ENCODE measurements at regions of chr9 and their contacts with region 1.

Region 1: DNA sequence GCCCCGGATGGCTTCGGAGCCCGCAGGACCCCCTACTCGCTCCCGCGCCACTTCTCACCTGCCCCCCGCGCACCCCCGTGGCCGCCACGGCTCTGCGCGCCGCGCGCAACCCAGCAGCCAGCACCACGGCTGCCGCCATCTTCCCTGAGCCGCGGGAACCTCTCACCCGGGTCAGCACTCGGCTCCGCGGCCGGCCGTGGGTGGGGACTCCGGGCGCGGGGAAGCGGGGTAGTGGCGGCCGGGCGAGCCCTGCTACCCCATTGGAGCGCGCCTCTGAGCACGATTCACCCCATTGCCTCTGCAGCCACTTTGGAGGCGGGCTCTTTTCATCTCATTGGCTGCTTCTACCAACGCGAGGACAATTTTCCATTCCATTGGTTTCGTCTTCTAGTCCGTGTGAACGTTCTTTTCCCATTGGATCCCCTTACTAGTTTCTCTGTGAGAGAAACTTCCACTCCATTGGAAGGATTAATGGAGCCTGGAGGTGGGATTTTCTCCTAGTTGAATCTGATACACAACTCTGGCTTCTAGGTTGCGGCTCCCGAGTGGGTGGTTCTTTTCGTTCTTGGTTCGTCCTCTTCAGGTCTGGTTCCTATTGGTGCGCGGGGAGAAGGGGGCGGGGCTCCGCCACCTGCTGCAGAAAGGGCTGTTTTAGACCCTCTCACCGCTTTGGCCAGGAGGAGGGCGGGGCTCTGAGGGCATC is at the start of gene HINT2:
- DNase-seq: peak; percentile 98
- ATAC-seq: peak; percentile 82
- H3K4me3 ChIP-seq: peak within 1 kb of the TSS; percentile 61 to 96 (median 88)
- H3K4me3 Mint-ChIP-seq: peak within 1 kb of the TSS; percentile 97
- H3K27ac ChIP-seq: peak within 1 kb of the TSS; percentile 87 to 88
- H3K27ac Mint-ChIP-seq: peak within 1 kb of the TSS; percentile 98
- H3K4me1 ChIP-seq: peaks cover 26 to 33% of the 10 kb centered on the region in 2 donors
- H3K4me1 Mint-ChIP-seq: peaks cover 30% of the 10 kb centered on the region
- H3K27me3 ChIP-seq: no peaks in the 10 kb centered on the region
- H3K27me3 Mint-ChIP-seq: no peaks in the 10 kb centered on the region
- CTCF ChIP-seq: no peak
- total RNA-seq, gene HINT2: 29.7 and 31.9 TPM in 2 replicates

Region 2: GRCh38 chr9:34665381-34666250 is 1149.4 kb before region 1 on chr9:
- CTCF ChIA-PET with region 1: no interaction called
- POLR2A ChIA-PET with region 1: no interaction called
- intact Hi-C with region 1: loop called (anchors 5 kb)
- DNase-seq: peak; percentile 93
- ATAC-seq: peak; percentile 90
- H3K4me3 ChIP-seq: peak overlapping the region; percentile 65 to 87 (median 83)
- H3K4me3 Mint-ChIP-seq: peak overlapping the region; percentile 94
- H3K27ac ChIP-seq: peak overlapping the region; percentile 86 to 93
- H3K27ac Mint-ChIP-seq: peak overlapping the region; percentile 94
- H3K4me1 ChIP-seq: peaks cover 10 to 18% of the 10 kb centered on the region in 2 donors
- H3K4me1 Mint-ChIP-seq: peaks cover 20% of the 10 kb centered on the region
- H3K27me3 ChIP-seq: no peaks in the 10 kb centered on the region
- H3K27me3 Mint-ChIP-seq: no peaks in the 10 kb centered on the region
- CTCF ChIP-seq: no peak

Region 3: GRCh38 chr9:35646533-35647265 is 168.3 kb before region 1 on chr9:
- CTCF ChIA-PET with region 1: interaction called, 3 read pairs
- POLR2A ChIA-PET with region 1: no interaction called
- intact Hi-C with region 1: loop called (anchors 1 kb)
- DNase-seq: peak; percentile 95
- ATAC-seq: peak; percentile 89
- H3K4me3 ChIP-seq: peak overlapping the region; percentile 76 to 90 (median 84)
- H3K4me3 Mint-ChIP-seq: peak overlapping the region; percentile 97
- H3K27ac ChIP-seq: peak overlapping the region; percentile 88 to 95
- H3K27ac Mint-ChIP-seq: peak overlapping the region; percentile 97
- H3K4me1 ChIP-seq: peaks cover 76 to 92% of the 10 kb centered on the region in 2 donors
- H3K4me1 Mint-ChIP-seq: peaks cover 81% of the 10 kb centered on the region
- H3K27me3 ChIP-seq: no peaks in the 10 kb centered on the region
- H3K27me3 Mint-ChIP-seq: no peaks in the 10 kb centered on the region
- CTCF ChIP-seq: peak; percentile 94

Region 4: GRCh38 chr9:35756275-35757225 is 58.4 kb before region 1 on chr9:
- CTCF ChIA-PET with region 1: interaction called, 7 read pairs
- POLR2A ChIA-PET with region 1: interaction called, 4 read pairs
- intact Hi-C with region 1: loop called (anchors 1 kb)
- DNase-seq: peak; percentile 84
- ATAC-seq: peak; percentile 80
- H3K4me3 ChIP-seq: peak overlapping the region; percentile 39 to 85 (median 81)
- H3K4me3 Mint-ChIP-seq: peak overlapping the region; percentile 93
- H3K27ac ChIP-seq: peak overlapping the region; percentile 92 to 94
- H3K27ac Mint-ChIP-seq: peak overlapping the region; percentile 97
- H3K4me1 ChIP-seq: peaks cover 34 to 44% of the 10 kb centered on the region in 2 donors
- H3K4me1 Mint-ChIP-seq: peaks cover 65% of the 10 kb centered on the region
- H3K27me3 ChIP-seq: no peaks in the 10 kb centered on the region
- H3K27me3 Mint-ChIP-seq: no peaks in the 10 kb centered on the region
- CTCF ChIP-seq: peak; percentile 70

Region 5: DNA sequence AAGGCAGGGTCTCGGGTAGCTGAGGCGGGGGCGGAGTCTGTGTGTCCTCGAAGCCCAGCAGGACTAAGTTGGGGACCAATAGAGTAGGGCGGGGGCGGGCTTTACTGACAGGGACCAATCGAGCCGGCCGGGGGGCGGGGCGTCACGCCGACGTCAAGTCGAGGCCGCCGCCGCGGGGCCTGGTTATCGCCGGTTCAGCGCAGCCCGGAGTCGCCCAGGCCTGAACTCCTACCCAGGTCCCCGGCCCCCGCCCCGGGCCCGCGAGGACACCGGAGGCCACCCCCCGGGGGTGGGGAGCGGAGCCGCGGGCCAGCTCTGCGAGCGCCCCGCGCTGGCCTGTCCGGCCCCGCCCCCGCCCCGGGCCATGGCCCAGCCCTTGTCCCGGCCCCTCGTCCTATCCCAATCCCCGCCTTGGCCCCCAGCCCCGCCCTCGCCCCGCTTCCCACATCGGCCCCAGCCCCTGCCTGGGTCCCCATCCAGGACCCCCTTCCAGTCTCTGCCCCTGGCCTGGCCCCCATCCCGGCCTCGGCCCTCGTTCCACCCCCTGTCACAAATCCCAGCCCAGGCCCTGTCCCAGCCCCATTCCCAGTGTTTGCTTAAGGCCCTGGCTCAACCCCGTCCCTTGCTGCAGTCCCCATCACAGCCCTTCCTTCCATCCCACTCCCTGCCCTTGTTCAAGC is 14.2 kb after region 1 on chr9 and contains the start of gene TMEM8B:
- CTCF ChIA-PET with region 1: interaction called, 58 read pairs
- POLR2A ChIA-PET with region 1: interaction called, 3 read pairs
- intact Hi-C with region 1: loop called (anchors 1 kb)
- DNase-seq: peak; percentile 94
- ATAC-seq: peak; percentile 92
- H3K4me3 ChIP-seq: peak within 1 kb of the TSS; percentile 32 to 80 (median 78)
- H3K4me3 Mint-ChIP-seq: peak within 1 kb of the TSS; percentile 96
- H3K27ac ChIP-seq: peak within 1 kb of the TSS; percentile 60 to 78
- H3K27ac Mint-ChIP-seq: peak within 1 kb of the TSS; percentile 89
- H3K4me1 ChIP-seq: peaks cover 24 to 35% of the 10 kb centered on the region in 2 donors
- H3K4me1 Mint-ChIP-seq: peaks cover 44% of the 10 kb centered on the region
- H3K27me3 ChIP-seq: no peaks in the 10 kb centered on the region
- H3K27me3 Mint-ChIP-seq: no peaks in the 10 kb centered on the region
- CTCF ChIP-seq: no peak
- total RNA-seq, gene TMEM8B: 13.6 and 14.5 TPM in 2 replicates

Region 6: DNA sequence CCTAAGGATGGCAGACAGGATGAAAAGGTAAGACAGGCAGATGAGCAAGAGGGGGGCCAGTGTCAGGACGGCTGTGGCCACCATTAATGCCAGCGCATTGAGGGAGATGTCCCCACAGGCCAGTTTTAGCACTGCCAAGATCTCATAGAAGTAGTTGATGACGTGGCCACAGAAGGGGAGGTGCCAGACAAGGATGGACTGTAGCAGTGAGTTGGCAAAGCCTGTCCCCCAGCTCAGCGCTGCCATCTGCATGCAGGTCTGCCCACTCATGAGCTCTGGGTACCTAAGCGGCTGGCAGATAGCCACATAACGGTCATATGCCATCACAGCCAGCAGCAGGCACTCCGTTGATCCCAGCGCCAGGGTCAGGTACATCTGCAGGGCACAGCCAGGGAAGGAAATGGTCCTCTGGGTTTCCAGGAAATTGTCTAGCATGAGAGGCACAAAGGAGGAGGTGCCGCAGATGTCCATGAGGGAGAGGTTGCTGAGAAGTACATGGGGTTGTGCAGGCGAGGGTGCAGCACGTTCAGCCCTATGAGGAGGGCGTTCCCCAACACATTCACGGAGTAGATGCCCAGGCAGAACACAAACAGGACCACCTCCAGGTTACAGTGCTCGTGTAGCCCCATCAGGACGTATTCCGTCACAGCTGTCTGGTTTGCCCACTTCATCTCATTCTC is 44.5 kb after region 1 on chr9:
- CTCF ChIA-PET with region 1: no interaction called
- POLR2A ChIA-PET with region 1: no interaction called
- intact Hi-C with region 1: no loop called
- DNase-seq: peak; percentile 45
- ATAC-seq: peak; percentile 76
- H3K4me3 ChIP-seq: no peak overlapping the region
- H3K4me3 Mint-ChIP-seq: no peak overlapping the region
- H3K27ac ChIP-seq: no peak overlapping the region
- H3K27ac Mint-ChIP-seq: no peak overlapping the region
- H3K4me1 ChIP-seq: no peaks in the 10 kb centered on the region
- H3K4me1 Mint-ChIP-seq: no peaks in the 10 kb centered on the region
- H3K27me3 ChIP-seq: peaks cover 0 to 12% (median 3%) of the 10 kb centered on the region in 4 experiments
- H3K27me3 Mint-ChIP-seq: peaks cover 22% of the 10 kb centered on the region
- CTCF ChIP-seq: no peak

Region 7: GRCh38 chr9:35882263-35882848 is 67.4 kb after region 1 on chr9:
- CTCF ChIA-PET with region 1: interaction called, 27 read pairs
- POLR2A ChIA-PET with region 1: no interaction called
- intact Hi-C with region 1: no loop called
- DNase-seq: peak; percentile 84
- ATAC-seq: peak; percentile 66
- H3K4me3 ChIP-seq: no peak overlapping the region
- H3K4me3 Mint-ChIP-seq: no peak overlapping the region
- H3K27ac ChIP-seq: no peak overlapping the region
- H3K27ac Mint-ChIP-seq: no peak overlapping the region
- H3K4me1 ChIP-seq: no peaks in the 10 kb centered on the region
- H3K4me1 Mint-ChIP-seq: no peaks in the 10 kb centered on the region
- H3K27me3 ChIP-seq: peaks cover 0 to 3% (median 0%) of the 10 kb centered on the region in 4 experiments
- H3K27me3 Mint-ChIP-seq: peaks cover 17% of the 10 kb centered on the region
- CTCF ChIP-seq: peak; percentile 99

Measured in B cell (primary cell).